ENCODE measurements at regions of chr3 and their contacts with region 1.

Region 1: GRCh38 chr3:160941885-160942494 is 163.2 kb downstream of the B3GALNT1 start:
- DNase-seq: no peak
- H3K4me3 ChIP-seq: no peak overlapping the region
- H3K27ac ChIP-seq: no peak overlapping the region
- H3K4me1 ChIP-seq: peaks cover 0 to 7% (median 0%) of the 10 kb centered on the region in 3 donors
- H3K27me3 ChIP-seq: no peaks in the 10 kb centered on the region
- CTCF ChIP-seq: peak; percentile 66 to 90 (median 84)
- POLR2A ChIP-seq: no peak

Region 2: DNA sequence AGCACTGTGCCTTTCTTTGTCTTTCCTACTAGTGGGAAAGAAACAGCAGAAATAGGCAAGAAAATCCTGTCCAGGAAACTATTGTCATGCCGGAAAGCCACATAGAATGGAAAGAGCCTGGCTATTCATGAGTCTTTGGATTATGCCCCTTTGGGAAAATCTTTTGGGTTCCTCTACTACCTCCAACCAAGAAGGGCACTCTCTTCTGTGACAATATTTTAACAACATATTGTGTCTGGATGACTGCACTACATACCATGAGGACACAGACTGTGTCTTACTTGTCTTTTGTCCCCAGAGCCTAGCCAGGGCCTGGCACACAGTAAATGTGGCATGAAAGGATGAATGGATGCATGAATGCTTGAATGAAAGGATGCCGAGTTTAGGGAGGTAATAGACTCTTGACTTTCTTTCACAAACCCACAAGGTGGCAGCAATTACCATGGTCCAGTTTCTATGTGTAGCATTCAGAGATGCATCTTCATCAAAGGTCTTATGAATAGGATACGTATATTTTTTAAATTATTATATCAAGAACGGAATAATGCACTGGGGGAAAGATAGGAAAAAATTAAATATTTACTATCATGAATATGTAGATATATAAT is 234.7 kb before region 1 on chr3:
- intact Hi-C with region 1: loop called (anchors 5 kb)
- DNase-seq: no peak
- H3K4me3 ChIP-seq: no peak overlapping the region
- H3K27ac ChIP-seq: no peak overlapping the region
- H3K4me1 ChIP-seq: no peaks in the 10 kb centered on the region
- H3K27me3 ChIP-seq: peaks cover 0 to 8% (median 0%) of the 10 kb centered on the region in 4 donors
- CTCF ChIP-seq: peak; percentile 29 to 66 (median 51)
- POLR2A ChIP-seq: no peak

Region 3: DNA sequence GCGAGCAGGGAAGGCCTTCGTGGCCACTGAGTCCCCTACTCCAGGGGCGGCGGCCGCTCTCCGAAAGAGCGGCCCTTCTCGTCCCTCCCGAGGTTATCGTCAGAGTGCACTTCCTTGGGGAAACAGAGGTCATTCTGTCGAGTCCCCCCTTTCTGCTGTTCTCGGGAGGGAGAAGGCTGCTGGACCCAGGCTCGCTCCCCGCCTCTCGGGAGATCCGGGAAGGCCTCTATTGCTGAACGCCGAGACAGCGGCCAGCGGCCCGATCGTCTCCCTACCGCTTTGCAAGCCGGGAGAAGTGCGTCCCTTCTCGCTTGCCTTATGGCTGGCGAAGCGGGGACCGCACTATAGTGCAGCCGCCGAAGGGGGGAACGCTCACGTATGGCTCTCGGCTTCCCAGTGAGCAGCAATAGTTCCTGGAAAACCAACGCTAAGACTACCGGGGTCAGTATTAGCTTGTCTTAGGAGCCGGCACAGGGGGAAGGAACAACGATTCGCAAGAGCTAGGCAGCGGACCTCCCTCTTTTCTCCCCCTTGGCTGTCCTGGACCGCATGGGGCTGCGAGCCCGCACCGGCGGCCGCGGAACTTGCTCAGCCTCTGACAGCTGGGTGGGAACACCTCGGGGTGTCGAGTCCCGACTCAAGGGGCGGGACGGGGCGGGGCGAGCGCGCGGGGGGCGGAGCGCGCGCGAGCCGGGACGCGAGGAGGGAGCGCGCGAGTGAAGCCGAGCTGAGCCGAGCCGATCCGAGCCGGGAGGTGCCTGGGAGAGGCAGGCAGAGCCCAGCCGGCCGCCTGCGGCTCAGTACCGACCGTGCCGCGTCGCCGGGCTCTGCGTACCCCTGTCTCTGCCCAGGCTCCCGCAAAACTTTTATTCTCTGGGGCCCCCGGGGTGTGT is 186.9 kb before region 1 on chr3:
- intact Hi-C with region 1: no loop called
- DNase-seq: peak; percentile 73
- H3K4me3 ChIP-seq: peak overlapping the region; percentile 62 to 95 (median 84)
- H3K27ac ChIP-seq: peak overlapping the region; percentile 87 to 98 (median 96)
- H3K4me1 ChIP-seq: peaks cover 10 to 49% (median 23%) of the 10 kb centered on the region in 3 donors
- H3K27me3 ChIP-seq: no peaks in the 10 kb centered on the region
- CTCF ChIP-seq: peak in 1 of 6 experiments; percentile 6
- POLR2A ChIP-seq: peak in 3 of 4 donors; percentile 11 to 85 (median 75)

Region 4: DNA sequence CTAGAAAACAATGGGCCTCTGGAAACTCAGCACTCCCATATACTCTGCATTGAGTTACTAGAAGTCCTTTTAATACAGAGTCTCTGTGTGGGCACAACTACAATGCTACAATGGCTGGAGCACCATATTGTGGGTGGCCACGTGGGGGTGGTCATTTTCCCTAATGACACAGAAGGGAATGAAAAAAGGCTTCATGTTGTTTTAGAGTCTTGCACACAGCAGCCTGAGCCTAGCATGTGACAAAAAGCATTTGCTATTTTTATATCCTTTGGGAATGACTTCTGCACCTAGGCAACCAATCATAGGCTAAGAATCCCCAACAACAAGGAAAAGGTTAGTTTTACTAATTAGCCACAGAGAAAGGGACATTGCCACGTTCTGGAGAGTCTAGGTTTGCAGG is 65.3 kb before region 1 on chr3:
- intact Hi-C with region 1: no loop called
- DNase-seq: no peak
- H3K4me3 ChIP-seq: no peak overlapping the region
- H3K27ac ChIP-seq: no peak overlapping the region
- H3K4me1 ChIP-seq: no peaks in the 10 kb centered on the region
- H3K27me3 ChIP-seq: no peaks in the 10 kb centered on the region
- CTCF ChIP-seq: no peak
- POLR2A ChIP-seq: no peak

Measured in esophagus squamous epithelium (tissue), 5 donors.